ENCODE measurements at regions of chr10 and their contacts with region 1.

Region 1: GRCh38 chr10:68897336-68897741 is 3.8 kb upstream of the DDX50 start:
- DNase-seq: peak; percentile 70 to 80 (median 73)
- H3K4me3 ChIP-seq: no peak overlapping the region
- H3K27ac ChIP-seq: no peak overlapping the region
- H3K4me1 ChIP-seq: peaks cover 7 to 17% (median 14%) of the 10 kb centered on the region in 4 experiments
- H3K27me3 ChIP-seq: no peaks in the 10 kb centered on the region

Region 2: DNA sequence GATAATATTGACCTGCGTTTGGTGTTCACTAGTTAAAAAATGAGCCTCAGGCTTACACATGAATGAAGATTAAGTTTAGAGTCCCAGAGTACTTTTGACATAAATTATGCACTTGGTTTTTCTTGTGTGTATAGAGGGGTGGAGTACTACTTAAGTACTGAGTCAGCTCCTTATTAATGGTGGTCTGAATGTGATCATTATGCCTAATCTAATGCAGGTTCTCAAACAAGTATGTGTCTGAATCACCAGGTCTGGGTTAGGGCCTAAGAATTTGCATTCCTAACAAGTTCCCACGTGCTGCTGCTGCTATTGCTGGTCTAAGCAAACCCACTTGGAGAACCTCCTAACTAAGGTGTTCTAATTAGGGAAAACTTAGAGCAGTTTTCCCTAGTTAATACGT is 100.7 kb before region 1 on chr10:
- CTCF ChIA-PET with region 1: interaction called, 10 read pairs
- POLR2A ChIA-PET with region 1: no interaction called
- DNase-seq: no peak
- H3K4me3 ChIP-seq: no peak overlapping the region
- H3K27ac ChIP-seq: no peak overlapping the region
- H3K4me1 ChIP-seq: no peaks in the 10 kb centered on the region
- H3K27me3 ChIP-seq: no peaks in the 10 kb centered on the region